ENCODE measurements at regions of chr3 and their contacts with region 1.

Region 1: DNA sequence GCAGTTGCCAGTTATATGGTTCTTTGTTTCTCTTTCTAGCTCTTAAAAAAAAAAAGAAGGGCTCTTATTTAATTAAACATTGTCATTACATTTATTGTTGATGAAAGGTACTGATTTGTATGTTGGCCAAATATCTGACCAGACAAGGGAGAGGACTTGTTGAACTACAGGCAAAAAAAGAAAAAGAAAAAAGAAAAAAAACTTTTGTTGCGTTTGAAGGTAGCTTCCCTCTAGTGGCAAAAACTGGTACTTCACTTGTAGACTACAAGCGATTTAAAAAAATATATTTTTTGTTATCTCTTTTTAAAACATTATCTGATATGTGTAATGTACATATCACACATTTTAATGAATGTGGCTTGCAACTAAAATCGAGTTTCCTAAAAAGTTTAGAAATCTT is 280.6 kb downstream of the ROBO2 start:
- DNase-seq: no peak
- H3K4me3 ChIP-seq: no peak overlapping the region
- H3K27ac ChIP-seq: no peak overlapping the region
- H3K4me1 ChIP-seq: peaks cover 0 to 5% (median 0%) of the 10 kb centered on the region in 4 experiments; a peak in 1 of 7 replicates
- H3K27me3 ChIP-seq: no peaks in the 10 kb centered on the region
- CTCF ChIP-seq: peak in 2 of 3 experiments; percentile 35 to 39; a peak in 2 of 4 replicates
- EP300 ChIP-seq: no peak
- POLR2A ChIP-seq: no peak
- RAD21 ChIP-seq: peak in 1 of 2 experiments; percentile 39

Region 2: DNA sequence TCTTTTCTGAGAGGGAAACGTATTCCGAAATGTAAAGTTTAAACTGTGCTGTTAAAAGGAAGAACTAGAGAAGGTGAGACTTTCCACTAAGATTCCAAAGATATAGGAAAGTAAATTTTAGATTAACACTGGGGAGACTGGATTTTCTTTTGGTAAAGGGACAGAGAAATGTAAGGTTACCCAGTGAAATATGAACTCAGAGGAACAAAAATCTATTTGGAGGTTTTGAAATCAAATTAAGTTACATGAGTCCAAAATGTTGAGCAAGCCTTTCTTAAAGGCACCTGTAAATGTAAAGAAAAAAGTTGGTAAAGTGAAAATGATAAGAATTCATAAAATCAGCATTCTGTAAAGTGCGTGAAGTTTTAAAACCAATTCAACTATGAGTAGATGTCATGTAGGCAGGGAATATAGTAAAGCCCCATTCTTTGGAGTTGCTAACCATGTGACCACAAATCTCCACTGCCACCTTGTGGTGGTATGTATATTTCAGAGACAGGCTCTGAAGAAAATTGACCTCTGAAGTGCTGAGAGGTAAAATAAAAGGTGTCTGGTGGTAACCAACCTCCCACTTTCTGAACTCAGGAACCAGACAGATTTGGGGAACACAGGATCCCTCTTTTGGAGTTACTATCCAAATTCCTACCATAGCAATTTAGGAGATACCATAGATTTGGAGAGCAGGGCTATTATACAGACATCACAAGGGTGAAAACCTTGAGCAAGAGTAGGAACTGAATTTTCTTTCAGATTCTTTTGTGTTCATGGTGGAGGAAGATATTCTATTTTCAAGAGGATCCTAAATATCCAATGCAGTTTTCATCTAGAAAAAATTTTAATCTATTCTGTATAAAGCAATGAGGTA is 65.3 kb before region 1 on chr3:
- CTCF ChIA-PET with region 1: interaction called, 16 read pairs
- POLR2A ChIA-PET with region 1: no interaction called
- DNase-seq: peak in 1 of 2 experiments; percentile 62
- H3K4me3 ChIP-seq: no peak overlapping the region
- H3K27ac ChIP-seq: no peak overlapping the region
- H3K4me1 ChIP-seq: no peaks in the 10 kb centered on the region
- H3K27me3 ChIP-seq: no peaks in the 10 kb centered on the region
- CTCF ChIP-seq: peak in 2 of 3 experiments; percentile 67 to 69; a peak in 3 of 4 replicates
- EP300 ChIP-seq: no peak
- POLR2A ChIP-seq: no peak
- RAD21 ChIP-seq: peak; percentile 91 to 92

Region 3: GRCh38 chr3:77303955-77304699 is 16.4 kb before region 1 on chr3:
- CTCF ChIA-PET with region 1: interaction called, 27 read pairs
- POLR2A ChIA-PET with region 1: no interaction called
- DNase-seq: no peak
- H3K4me3 ChIP-seq: no peak overlapping the region
- H3K27ac ChIP-seq: no peak overlapping the region
- H3K4me1 ChIP-seq: no peaks in the 10 kb centered on the region
- H3K27me3 ChIP-seq: no peaks in the 10 kb centered on the region
- CTCF ChIP-seq: no peak
- EP300 ChIP-seq: no peak
- POLR2A ChIP-seq: no peak
- RAD21 ChIP-seq: no peak

Region 4: DNA sequence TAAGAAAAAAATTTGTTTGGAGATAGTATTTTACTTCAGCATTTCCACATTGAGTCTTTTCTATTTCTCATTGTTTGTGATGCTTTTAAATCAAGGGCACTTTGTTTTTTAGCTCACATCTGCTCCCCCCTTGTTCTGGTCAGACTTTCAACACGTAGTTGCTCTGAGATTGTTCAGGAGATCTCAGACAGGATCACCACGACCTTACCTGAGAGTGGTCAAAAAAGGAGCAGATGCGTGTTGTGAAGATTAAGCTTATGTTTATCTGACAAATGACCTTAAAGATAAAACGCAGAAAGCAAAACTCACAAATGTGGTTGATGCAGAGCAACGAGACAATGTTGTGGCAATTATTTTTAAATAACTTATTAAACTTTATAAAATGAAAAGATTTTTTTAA is 17.7 kb after region 1 on chr3:
- CTCF ChIA-PET with region 1: interaction called, 18 read pairs
- POLR2A ChIA-PET with region 1: no interaction called
- DNase-seq: no peak
- H3K4me3 ChIP-seq: no peak overlapping the region
- H3K27ac ChIP-seq: no peak overlapping the region
- H3K4me1 ChIP-seq: no peaks in the 10 kb centered on the region
- H3K27me3 ChIP-seq: no peaks in the 10 kb centered on the region
- CTCF ChIP-seq: no peak
- EP300 ChIP-seq: no peak
- POLR2A ChIP-seq: no peak
- RAD21 ChIP-seq: no peak